Colonic mucosa (tissue), 4 donors: ENCODE measurements at regions of chrX and their contacts with region 1.

Region 1: GRCh38 chrX:136496770-136497598 is at the start of gene HTATSF1:
- DNase-seq: peak; percentile 87
- H3K4me3 ChIP-seq: peak within 1 kb of the TSS; percentile 61
- H3K27ac ChIP-seq: peak within 1 kb of the TSS; percentile 90
- H3K4me1 ChIP-seq: no peaks in the 10 kb centered on the region
- H3K27me3 ChIP-seq: no peaks in the 10 kb centered on the region
- CTCF ChIP-seq: no peak
- total RNA-seq, gene HTATSF1: 30.6 to 35.9 TPM

Region 2: GRCh38 chrX:135985141-135985972 is 511.6 kb before region 1 on chrX and contains the start of gene SLC9A6:
- intact Hi-C with region 1: loop called (anchors 10 kb)
- DNase-seq: peak; percentile 76
- H3K4me3 ChIP-seq: peak within 1 kb of the TSS; percentile 68
- H3K27ac ChIP-seq: peak within 1 kb of the TSS; percentile 66
- H3K4me1 ChIP-seq: peaks cover 3% of the 10 kb centered on the region
- H3K27me3 ChIP-seq: no peaks in the 10 kb centered on the region
- CTCF ChIP-seq: no peak
- total RNA-seq, gene SLC9A6: 12.7 to 16.6 TPM

Region 3: GRCh38 chrX:136021160-136021559 is 475.8 kb before region 1 on chrX:
- intact Hi-C with region 1: no loop called
- DNase-seq: no peak
- H3K4me3 ChIP-seq: no peak overlapping the region
- H3K27ac ChIP-seq: no peak overlapping the region
- H3K4me1 ChIP-seq: no peaks in the 10 kb centered on the region
- H3K27me3 ChIP-seq: no peaks in the 10 kb centered on the region
- CTCF ChIP-seq: no peak

Region 4: DNA sequence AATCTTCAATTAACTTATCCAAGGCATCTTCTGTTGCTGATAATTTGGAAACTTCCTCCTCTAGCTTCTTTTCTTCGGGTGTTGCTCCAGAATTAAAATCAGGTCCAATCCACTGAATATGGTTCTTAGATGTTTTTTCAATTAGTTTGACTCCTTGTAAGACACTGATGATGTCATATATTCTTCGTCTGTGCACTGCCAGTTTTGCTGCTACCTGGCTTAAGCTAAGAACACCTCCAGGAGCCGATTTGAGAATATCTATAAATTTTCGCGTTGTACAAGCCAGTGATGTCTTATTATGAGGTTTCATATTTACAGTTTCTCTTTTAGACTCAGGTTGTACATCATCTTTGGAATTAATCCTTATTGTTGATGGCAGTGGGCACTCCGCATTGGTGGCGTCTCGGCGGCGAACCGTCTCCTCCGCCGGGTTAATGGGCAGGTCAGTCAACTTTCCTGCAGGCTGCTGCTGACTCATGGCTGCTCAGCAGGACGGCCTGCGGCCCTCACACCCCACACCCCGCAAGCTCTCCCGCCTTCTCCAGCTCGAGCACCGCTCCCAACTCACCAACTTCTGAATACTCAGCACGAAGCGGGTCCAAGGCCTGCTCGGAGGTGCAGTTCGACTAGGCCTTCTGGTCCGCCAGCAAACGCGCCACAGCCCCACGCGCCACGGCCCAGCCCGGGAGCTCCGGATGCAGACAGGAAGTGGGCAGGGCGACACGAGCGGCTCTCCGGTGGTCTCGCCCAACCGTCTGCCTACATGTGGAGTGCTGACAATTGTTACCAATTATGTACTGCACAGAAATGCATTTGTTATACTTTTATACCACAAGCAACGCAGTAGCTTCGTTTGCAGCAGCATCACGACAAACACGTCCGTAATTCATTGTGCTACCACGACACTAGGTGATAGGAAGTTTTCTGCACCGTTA is 398.8 kb before region 1 on chrX:
- intact Hi-C with region 1: no loop called
- DNase-seq: no peak
- H3K4me3 ChIP-seq: no peak overlapping the region
- H3K27ac ChIP-seq: no peak overlapping the region
- H3K4me1 ChIP-seq: no peaks in the 10 kb centered on the region
- H3K27me3 ChIP-seq: no peaks in the 10 kb centered on the region
- CTCF ChIP-seq: no peak